Dorsolateral prefrontal cortex (tissue), 120 donors: ENCODE measurements at regions of chr2 and their contacts with region 1.

Region 1: DNA sequence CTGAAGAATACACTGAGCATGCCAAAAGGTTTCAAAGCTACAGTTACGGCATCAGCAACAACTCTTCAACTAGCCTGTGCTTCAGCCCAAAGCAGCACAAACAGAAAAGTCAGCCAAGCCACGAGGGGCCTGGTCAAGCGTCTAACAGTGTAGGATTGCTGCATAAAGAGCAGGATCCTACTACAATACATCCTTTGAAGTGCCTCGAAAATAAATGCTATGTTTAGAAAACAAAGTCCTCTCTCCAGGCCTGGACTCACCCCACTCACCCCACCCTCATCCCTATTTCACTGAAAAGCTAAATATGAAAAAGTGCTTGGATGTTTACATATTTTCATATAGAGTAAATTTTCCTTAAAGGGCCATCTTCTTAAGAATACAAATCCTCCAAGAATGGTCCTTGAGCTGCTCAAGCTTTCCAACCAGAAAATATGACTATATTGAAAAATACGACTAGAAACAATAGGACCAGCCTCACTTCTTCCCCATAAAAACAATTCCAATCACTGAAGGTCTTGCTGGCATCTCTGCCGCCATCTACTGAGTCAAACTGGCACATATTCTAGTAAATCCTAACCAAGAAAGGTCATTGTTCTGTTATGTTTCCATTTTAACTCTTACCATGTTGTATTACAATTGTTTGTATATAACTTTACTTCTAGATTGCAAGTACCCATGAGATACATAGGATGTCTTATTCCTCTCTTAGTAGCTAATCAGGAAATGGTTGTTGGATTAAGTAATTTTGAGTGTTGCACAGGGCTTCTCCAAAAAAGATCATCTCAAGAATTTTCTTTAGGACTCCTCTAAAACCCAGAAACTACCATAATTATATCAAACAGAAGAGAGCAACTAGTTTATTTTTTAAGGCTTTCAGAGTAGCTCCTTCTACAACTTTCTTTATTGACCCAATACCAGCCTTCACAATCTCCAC is 63.6 kb downstream of the CLHC1 start:
- DNase-seq: peak; percentile 43 to 91 (median 74)
- H3K4me3 ChIP-seq: peak overlapping the region in 38 of 59 donors; percentile 0 to 47 (median 24)
- H3K27ac ChIP-seq: peak overlapping the region; percentile 3 to 98 (median 93)
- H3K27me3 ChIP-seq: no peaks in the 10 kb centered on the region
- CTCF ChIP-seq: peak; percentile 66 to 94 (median 85)

Region 2: DNA sequence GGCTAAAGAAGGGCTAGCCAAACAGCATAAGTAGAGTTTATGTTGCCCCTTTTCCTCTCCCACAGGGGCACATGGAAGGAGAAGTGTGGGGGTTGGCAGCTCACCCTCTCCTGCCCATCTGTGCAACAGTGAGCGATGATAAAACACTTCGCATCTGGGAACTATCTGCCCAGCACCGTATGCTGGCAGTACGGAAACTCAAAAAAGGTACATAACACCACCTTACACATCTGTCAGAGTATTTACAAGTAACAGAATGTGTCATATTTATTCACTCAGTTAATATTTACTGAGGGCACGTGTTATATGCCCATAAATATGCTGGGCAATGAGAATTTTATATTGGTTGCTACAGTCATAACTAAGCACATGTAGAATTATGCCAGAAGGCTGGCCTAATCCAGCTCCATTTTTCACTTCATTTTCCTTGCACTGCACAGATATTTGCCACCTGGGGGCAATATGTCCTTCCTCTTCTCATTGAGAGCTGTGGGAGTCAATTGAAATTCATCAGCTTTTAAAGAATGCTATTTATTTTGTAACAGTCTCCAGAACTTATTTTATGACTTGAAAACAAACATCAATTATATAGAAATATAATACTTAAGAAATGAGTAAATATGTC is 268.8 kb before region 1 on chr2:
- intact Hi-C with region 1: loop called (anchors 2 to 5 kb)
- DNase-seq: peak in 1 of 10 donors; percentile 51
- H3K4me3 ChIP-seq: no peak overlapping the region
- H3K27ac ChIP-seq: peak overlapping the region in 49 of 59 donors; percentile 1 to 88 (median 44)
- H3K27me3 ChIP-seq: no peaks in the 10 kb centered on the region
- CTCF ChIP-seq: peak; percentile 21 to 86 (median 68)

Region 3: GRCh38 chr2:55010149-55010591 is 158.3 kb before region 1 on chr2:
- intact Hi-C with region 1: loop called (anchors 5 to 10 kb)
- DNase-seq: peak in 9 of 10 donors; percentile 50 to 76 (median 62)
- H3K4me3 ChIP-seq: peak overlapping the region; percentile 33 to 73 (median 59)
- H3K27ac ChIP-seq: peak overlapping the region; percentile 5 to 90 (median 78)
- H3K27me3 ChIP-seq: no peaks in the 10 kb centered on the region
- CTCF ChIP-seq: peak in 7 of 56 donors; percentile 6 to 40 (median 12)

Region 4: DNA sequence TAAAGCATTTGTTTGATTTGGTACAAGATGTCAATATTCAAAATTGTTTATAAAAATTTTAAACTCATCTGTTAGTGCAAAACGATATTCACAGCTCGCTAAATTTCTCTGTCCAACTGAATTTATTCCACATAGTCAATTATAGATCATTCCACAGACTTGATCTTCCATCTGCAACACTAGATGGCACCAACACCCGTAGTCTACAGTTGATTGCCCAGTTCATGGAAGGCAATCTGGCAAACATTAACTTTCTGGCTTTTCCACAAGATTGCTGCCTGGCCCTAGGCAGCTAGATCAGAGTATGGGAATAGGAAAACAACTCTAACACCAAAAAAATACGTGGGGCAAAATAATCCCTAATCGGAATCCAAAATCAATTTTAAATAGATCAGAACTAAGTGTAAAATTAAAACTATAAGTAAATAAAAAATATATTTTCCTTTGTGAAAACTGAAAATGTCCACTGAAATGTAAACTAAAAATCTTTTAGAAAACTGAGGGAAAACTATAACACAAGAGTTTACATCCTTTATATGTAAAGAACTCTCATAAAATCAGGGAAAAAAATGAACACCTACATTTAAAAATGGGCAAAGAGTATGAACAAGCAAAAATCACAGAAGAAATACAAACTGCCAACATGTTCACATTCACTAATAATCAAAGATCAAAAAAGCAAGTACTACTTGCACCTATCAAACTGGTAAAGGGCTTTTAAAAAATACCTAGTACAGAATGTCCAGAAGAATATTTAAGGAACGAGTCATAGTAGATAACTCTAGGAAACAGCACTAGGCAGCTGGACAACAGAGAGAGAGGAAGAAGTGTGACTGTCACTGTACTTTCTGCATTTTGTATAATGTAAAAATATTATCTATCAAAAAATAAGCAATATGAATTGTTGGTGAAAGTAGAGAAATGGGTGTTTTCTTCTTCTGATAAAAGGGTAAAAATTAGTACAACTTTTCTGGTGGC is 153.2 kb before region 1 on chr2:
- intact Hi-C with region 1: loop called (anchors 5 to 10 kb)
- DNase-seq: peak in 4 of 10 donors; percentile 46 to 72 (median 62)
- H3K4me3 ChIP-seq: peak overlapping the region in 3 of 59 donors; percentile 4 to 9 (median 7)
- H3K27ac ChIP-seq: peak overlapping the region in 51 of 59 donors; percentile 0 to 83 (median 55)
- H3K27me3 ChIP-seq: no peaks in the 10 kb centered on the region
- CTCF ChIP-seq: peak; percentile 40 to 89 (median 77)

Region 5: GRCh38 chr2:55111570-55112228 is 56.8 kb before region 1 on chr2:
- intact Hi-C with region 1: loop called (anchors 2 to 10 kb)
- DNase-seq: peak in 9 of 10 donors; percentile 45 to 91 (median 78)
- H3K4me3 ChIP-seq: peak overlapping the region in 42 of 59 donors; percentile 0 to 56 (median 25)
- H3K27ac ChIP-seq: peak overlapping the region; percentile 84 to 99 (median 96)
- H3K27me3 ChIP-seq: no peaks in the 10 kb centered on the region
- CTCF ChIP-seq: peak in 2 of 56 donors; percentile 5 to 14

Region 6: DNA sequence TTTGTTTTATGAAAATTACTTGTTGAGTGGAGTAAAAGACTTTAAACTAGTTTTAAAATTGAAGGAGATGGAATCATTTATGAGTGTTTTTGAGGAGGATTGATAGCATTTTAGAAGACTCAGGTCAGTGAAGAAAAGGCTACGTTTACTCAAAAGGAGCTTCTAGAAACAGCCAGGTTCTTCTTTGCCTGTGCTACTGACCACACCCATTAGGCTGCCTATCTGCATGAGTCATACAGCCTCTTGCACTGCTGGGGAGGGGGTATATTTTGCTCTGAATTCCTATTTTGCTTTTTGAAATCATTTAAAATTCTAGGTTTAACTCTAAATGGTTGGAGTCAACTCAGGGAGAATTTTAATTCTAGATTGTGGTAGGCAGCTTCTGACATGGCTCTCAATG is 732.8 kb after region 1 on chr2:
- intact Hi-C with region 1: no loop called
- DNase-seq: no peak
- H3K4me3 ChIP-seq: no peak overlapping the region
- H3K27ac ChIP-seq: no peak overlapping the region
- H3K27me3 ChIP-seq: no peaks in the 10 kb centered on the region
- CTCF ChIP-seq: no peak